HAP-1 (cell line): ENCODE measurements at regions of chr3 and their contacts with region 1.

Region 1: GRCh38 chr3:79521238-79521848 is 246.5 kb downstream of the ROBO1 start:
- DNase-seq: peak; percentile 41 to 75
- H3K4me3 ChIP-seq: no peak overlapping the region
- H3K4me1 ChIP-seq: peaks cover 8% of the 10 kb centered on the region; the same call in 1 of the 2 replicates
- H3K27me3 ChIP-seq: no peaks in the 10 kb centered on the region

Region 2: GRCh38 chr3:79392479-79392878 is 128.9 kb before region 1 on chr3:
- in situ Hi-C with region 1: no loop called
- DNase-seq: no peak
- H3K4me3 ChIP-seq: no peak overlapping the region
- H3K4me1 ChIP-seq: no peaks in the 10 kb centered on the region
- H3K27me3 ChIP-seq: no peaks in the 10 kb centered on the region

Region 3: GRCh38 chr3:80688814-80689213 is 1167.5 kb after region 1 on chr3:
- in situ Hi-C with region 1: loop called (anchors 25 kb)
- DNase-seq: peak; percentile 42 to 54
- H3K4me3 ChIP-seq: no peak overlapping the region
- H3K4me1 ChIP-seq: 0 out of 2 replicates have a peak, but pooled peaks cover 3% of the 10 kb centered on the region
- H3K27me3 ChIP-seq: no peaks in the 10 kb centered on the region